ENCODE measurements at regions of chr6 and their contacts with region 1.

Region 1: GRCh38 chr6:157379656-157380454 is 1.1 kb upstream of the ZDHHC14 start:
- DNase-seq: peak; percentile 63 to 89 (median 84)
- ATAC-seq: peak; percentile 85
- H3K4me3 ChIP-seq: peak overlapping the region; percentile 71
- H3K4me3 Mint-ChIP-seq: peak overlapping the region; percentile 80 to 93 (median 84)
- H3K27ac ChIP-seq: peak overlapping the region; percentile 80
- H3K27ac Mint-ChIP-seq: peak overlapping the region; percentile 2 to 89 (median 78)
- H3K4me1 ChIP-seq: peaks cover 4 to 5% of the 10 kb centered on the region in 2 donors
- H3K4me1 Mint-ChIP-seq: peaks cover 7 to 35% (median 18%) of the 10 kb centered on the region in 7 donors
- H3K27me3 ChIP-seq: no peaks in the 10 kb centered on the region
- H3K27me3 Mint-ChIP-seq: peaks cover 0 to 14% (median 4%) of the 10 kb centered on the region in 5 donors

Region 2: DNA sequence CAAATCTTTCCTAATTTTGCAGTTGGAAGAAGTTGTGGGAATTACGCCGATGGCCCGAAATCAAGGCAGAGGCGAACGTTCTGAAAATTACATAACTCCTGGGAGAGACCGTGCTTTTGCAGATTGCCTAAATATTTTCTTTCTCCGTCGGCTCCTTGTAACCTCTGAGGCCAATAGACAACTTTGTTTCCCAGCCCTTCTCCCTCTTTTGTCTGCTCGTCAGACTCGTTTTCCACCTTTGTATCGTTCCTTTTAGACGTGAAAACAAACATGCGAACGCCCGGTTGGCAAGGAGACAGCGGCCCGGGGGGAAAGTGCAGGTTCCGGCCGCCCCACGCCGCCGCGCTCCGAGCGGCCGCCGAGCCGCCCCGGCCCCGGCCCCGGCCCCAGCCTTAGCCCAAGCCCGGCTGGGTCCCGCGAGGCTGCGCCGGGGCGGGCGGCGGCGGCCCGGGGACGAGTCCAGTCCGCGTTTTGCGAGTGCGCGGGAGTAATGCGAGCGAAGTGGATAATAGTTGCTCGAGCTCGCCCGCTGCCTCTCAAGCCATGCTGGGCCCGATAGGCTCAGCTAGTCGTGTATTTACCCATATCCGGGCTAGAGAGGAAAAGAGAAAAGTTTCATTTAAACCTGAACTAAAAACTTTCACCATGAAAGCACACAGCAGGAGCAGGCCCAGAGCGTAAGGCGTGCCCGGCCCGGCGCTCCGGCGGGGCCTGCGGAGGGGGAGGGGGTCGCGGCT is 602.8 kb before region 1 on chr6 and contains the start of gene ARID1B:
- CTCF ChIA-PET with region 1: no interaction called
- POLR2A ChIA-PET with region 1: no interaction called
- intact Hi-C with region 1: loop called in 1 of 2 experiments (anchors 2 kb)
- DNase-seq: peak; percentile 67 to 86 (median 80)
- ATAC-seq: peak; percentile 74
- H3K4me3 ChIP-seq: peak within 1 kb of the TSS; percentile 79
- H3K4me3 Mint-ChIP-seq: peak within 1 kb of the TSS; percentile 87 to 100 (median 96)
- H3K27ac ChIP-seq: peak within 1 kb of the TSS; percentile 81
- H3K27ac Mint-ChIP-seq: peak within 1 kb of the TSS; percentile 94 to 99 (median 99)
- H3K4me1 ChIP-seq: peaks cover 4 to 10% of the 10 kb centered on the region in 2 donors
- H3K4me1 Mint-ChIP-seq: peaks cover 11 to 44% (median 38%) of the 10 kb centered on the region in 7 donors
- H3K27me3 ChIP-seq: no peaks in the 10 kb centered on the region
- H3K27me3 Mint-ChIP-seq: peaks cover 0 to 4% (median 0%) of the 10 kb centered on the region in 5 donors
- total RNA-seq, gene ARID1B: 88.8 to 164 (median 141) TPM

Region 3: DNA sequence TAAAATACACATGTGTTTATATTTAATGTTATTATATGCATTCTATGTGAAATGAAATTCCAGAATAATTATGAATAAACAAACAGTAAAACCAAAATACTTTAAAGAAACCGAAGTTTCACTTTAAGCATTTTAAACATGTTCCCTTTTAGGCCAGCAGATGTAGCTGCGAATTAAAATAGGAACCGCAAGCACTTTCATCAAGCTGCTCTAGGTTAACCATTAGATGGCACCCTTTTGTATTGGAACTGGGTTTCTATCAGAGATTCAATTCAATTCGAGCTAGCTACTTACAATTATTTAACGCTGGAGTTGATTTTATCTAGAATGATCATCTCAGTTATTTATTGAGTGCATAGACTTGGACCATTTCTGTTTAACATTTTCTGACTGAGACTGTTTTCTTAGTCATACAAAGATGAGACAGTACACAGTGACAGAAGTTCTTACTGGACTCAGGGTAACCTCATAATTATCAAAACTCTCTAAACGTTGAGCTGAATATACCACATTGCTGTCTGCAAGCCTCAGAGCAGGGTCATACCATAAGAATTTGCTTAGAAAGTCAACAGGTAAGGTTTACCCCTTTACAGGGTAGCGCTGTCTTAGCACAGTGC is 65.0 kb before region 1 on chr6:
- CTCF ChIA-PET with region 1: interaction called, 3 read pairs
- POLR2A ChIA-PET with region 1: interaction called, 4 read pairs
- intact Hi-C with region 1: loop called in 1 of 2 experiments (anchors 1 kb)
- DNase-seq: peak in 7 of 9 donors; percentile 43 to 65 (median 52)
- ATAC-seq: peak; percentile 87
- H3K4me3 ChIP-seq: no peak overlapping the region
- H3K4me3 Mint-ChIP-seq: no peak overlapping the region
- H3K27ac ChIP-seq: no peak overlapping the region
- H3K27ac Mint-ChIP-seq: peak overlapping the region in 3 of 9 donors; percentile 16 to 48 (median 33)
- H3K4me1 ChIP-seq: no peaks in the 10 kb centered on the region
- H3K4me1 Mint-ChIP-seq: peaks cover 0 to 22% (median 6%) of the 10 kb centered on the region in 7 donors
- H3K27me3 ChIP-seq: no peaks in the 10 kb centered on the region
- H3K27me3 Mint-ChIP-seq: no peaks in the 10 kb centered on the region

Region 4: DNA sequence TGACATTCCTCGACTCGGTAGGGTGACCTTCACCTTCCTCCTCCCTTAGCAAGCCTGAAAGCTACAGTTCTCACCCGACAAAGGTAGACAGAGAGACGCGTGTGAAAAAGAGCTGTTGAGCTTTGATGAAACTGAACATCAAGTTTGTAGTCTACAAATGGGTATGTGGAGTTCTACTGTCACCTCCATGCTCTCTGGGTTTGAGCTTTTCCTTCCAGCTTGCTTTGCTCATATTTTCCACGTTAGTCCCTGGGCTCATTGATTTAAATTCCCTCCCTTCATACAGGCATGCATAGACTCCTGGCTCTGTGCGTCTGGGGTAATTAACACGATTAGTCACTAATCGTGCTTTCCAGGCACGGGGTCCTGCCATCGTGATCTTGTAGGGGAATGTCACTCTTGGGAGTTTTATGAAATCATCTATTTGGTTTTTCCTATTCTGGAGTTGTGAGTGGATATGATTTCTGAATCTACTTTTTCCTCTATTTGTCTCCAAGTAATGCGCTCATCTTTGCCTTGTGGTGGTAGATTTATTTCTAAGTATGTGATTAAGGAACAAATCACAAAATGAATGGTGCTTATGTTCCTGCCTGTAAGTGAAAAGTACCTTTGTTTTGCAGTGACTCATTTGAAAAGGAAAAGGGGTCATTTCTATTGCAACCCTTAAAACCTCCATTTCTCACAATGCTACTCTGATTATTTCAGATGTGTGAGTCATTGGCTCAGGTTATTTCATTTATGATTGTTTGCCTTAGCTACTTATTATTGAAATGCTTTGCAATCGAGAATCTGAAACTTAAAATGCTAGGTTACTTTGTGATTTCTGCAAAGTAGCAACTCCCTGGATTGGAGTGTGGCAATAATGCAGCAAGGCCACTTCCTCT is 155.7 kb after region 1 on chr6:
- CTCF ChIA-PET with region 1: no interaction called
- POLR2A ChIA-PET with region 1: no interaction called
- intact Hi-C with region 1: loop called in 1 of 2 experiments (anchors 1 kb)
- DNase-seq: peak in 1 of 9 donors; percentile 22
- ATAC-seq: peak; percentile 60
- H3K4me3 ChIP-seq: no peak overlapping the region
- H3K4me3 Mint-ChIP-seq: peak overlapping the region in 9 of 10 donors; percentile 25 to 76 (median 51)
- H3K27ac ChIP-seq: no peak overlapping the region
- H3K27ac Mint-ChIP-seq: peak overlapping the region; percentile 1 to 87 (median 45)
- H3K4me1 ChIP-seq: peaks cover 11 to 45% of the 10 kb centered on the region in 2 donors
- H3K4me1 Mint-ChIP-seq: peaks cover 22 to 61% (median 35%) of the 10 kb centered on the region in 7 donors
- H3K27me3 ChIP-seq: no peaks in the 10 kb centered on the region
- H3K27me3 Mint-ChIP-seq: no peaks in the 10 kb centered on the region

Region 5: DNA sequence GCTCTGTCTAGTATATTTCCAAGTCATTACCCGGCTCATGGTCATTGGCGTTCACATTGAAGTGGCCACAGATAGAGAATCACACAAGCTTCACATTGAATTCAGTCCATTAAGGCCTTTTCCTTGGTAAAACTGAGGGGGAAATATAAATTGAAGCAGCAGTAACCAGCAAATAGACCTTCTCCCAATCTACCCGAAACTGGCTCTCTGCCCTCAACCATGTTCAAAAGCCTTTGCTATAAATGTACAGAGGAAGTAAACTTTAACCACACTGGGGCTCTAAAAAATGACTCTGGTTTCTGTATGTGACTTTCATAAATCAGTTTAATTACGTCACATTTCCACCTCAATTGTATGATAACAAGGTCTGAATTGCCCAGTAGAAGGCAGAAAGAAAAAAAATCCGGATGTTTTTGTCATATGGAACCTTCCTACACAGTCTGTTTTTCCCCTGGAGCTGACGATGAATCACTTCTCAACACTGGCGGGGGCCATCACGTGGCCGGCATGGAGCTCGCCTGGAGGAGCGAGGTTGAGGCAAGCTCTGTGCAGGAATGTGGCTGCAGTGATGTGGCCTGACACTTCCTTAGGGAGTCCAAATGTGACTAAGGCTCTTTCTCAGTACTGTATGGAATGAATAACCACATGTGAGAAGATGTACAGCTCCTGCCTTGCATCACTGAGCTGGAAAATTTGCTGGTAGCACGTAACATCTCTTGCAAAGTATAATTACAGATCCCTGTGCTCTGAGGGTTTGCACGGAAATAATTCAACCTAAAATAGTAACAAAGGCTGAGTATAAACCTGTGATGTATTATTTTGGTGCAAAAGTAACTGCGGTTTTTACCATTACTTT is 384.6 kb after region 1 on chr6:
- CTCF ChIA-PET with region 1: no interaction called
- POLR2A ChIA-PET with region 1: no interaction called
- intact Hi-C with region 1: loop called (anchors 1 to 2 kb)
- DNase-seq: peak; percentile 58 to 96 (median 93)
- ATAC-seq: peak; percentile 87
- H3K4me3 ChIP-seq: peak overlapping the region; percentile 49
- H3K4me3 Mint-ChIP-seq: peak overlapping the region; percentile 71 to 84 (median 78)
- H3K27ac ChIP-seq: peak overlapping the region; percentile 56
- H3K27ac Mint-ChIP-seq: peak overlapping the region; percentile 90 to 99 (median 96)
- H3K4me1 ChIP-seq: peaks cover 27 to 65% of the 10 kb centered on the region in 2 donors
- H3K4me1 Mint-ChIP-seq: peaks cover 43 to 91% (median 75%) of the 10 kb centered on the region in 7 donors
- H3K27me3 ChIP-seq: no peaks in the 10 kb centered on the region
- H3K27me3 Mint-ChIP-seq: peaks cover 0 to 31% (median 0%) of the 10 kb centered on the region in 5 donors

Region 6: DNA sequence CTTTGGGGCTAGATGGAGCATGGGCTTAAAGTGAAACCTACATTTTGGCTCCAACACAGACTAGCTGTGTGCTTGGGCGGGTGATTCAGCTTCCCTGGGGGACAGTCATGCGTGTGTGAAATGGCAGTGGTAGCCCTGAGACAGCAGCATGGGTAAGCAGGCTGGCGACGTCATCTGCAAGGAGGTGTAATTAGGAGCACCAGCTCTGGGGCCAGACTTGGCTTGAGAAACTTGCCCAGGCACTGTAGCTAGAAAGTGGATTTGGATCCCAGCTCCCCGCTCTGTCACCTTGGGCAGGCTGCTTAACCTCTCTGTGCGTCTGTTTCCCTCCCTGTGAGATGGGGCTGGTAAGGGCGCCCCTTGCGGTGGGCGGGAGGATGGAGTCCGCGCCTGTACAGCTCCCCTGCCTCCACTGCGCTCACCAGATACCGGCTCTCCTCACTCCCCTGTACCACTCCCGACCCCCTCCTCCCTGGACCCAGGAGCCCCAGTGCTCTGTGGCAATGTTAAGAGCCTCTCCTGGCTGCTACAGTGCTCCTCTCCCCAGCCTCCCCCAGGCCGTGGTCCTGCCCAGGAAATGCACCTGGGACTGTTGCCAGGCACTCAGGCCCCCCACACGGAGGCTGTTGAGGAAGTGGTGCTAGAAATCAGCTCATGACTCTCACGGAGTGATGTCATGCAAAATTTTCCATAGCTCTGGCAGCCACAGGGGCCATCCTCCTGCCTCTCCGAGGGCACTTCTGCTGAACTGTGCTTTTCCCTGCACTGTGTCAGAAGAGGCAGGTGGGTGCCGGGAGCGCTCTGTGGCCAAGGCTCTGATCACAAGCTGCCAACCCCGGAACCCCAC is 646.4 kb after region 1 on chr6:
- CTCF ChIA-PET with region 1: no interaction called
- POLR2A ChIA-PET with region 1: no interaction called
- intact Hi-C with region 1: loop called (anchors 1 to 2 kb)
- DNase-seq: peak; percentile 67 to 94 (median 82)
- ATAC-seq: peak; percentile 84
- H3K4me3 ChIP-seq: peak overlapping the region; percentile 44
- H3K4me3 Mint-ChIP-seq: peak overlapping the region; percentile 79 to 86 (median 84)
- H3K27ac ChIP-seq: peak overlapping the region; percentile 73
- H3K27ac Mint-ChIP-seq: peak overlapping the region; percentile 88 to 98 (median 97)
- H3K4me1 ChIP-seq: peaks cover 22 to 23% of the 10 kb centered on the region in 2 donors
- H3K4me1 Mint-ChIP-seq: peaks cover 20 to 40% (median 35%) of the 10 kb centered on the region in 7 donors
- H3K27me3 ChIP-seq: no peaks in the 10 kb centered on the region
- H3K27me3 Mint-ChIP-seq: no peaks in the 10 kb centered on the region

Measured in naive thymus-derived CD4-positive, alpha-beta T cell (primary cell).